Ovary (tissue), 10 donors: ENCODE measurements at regions of chrX and their contacts with region 1.

Region 1: GRCh38 chrX:133660281-133660680 is 245.0 kb upstream of the GPC4 start:
- DNase-seq: no peak
- H3K4me3 ChIP-seq: no peak overlapping the region
- H3K27ac ChIP-seq: no peak overlapping the region
- H3K4me1 ChIP-seq: peaks cover 1% of the 10 kb centered on the region
- H3K27me3 ChIP-seq: no peaks in the 10 kb centered on the region
- CTCF ChIP-seq: no peak
- EP300 ChIP-seq: no peak
- POLR2A ChIP-seq: no peak

Region 2: DNA sequence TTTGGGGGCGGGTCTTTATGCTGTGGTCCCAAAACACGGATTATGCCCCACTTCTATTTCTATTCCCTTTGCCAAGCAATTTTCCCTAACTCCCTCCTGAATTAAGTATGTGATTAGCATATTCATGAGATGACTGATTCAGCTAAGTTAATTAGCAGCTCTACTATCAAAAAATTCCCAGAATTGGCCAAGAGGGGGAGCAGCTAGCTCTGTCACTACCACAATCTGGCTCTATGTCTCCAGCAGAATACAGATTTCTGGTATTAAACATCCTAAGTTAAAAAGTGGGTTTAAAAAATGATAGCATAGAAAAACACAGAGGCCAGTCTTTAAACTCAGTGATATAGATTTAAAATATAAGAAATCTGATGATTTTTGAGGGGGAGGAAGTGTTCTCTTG is 325.3 kb before region 1 on chrX:
- intact Hi-C with region 1: loop called in 1 of 4 experiments (anchors 10 kb)
- DNase-seq: peak in 1 of 5 donors; percentile 35
- H3K4me3 ChIP-seq: no peak overlapping the region
- H3K27ac ChIP-seq: no peak overlapping the region
- H3K4me1 ChIP-seq: no peaks in the 10 kb centered on the region
- H3K27me3 ChIP-seq: no peaks in the 10 kb centered on the region
- CTCF ChIP-seq: peak in 2 of 3 donors; percentile 21 to 25
- EP300 ChIP-seq: no peak
- POLR2A ChIP-seq: no peak

Region 3: DNA sequence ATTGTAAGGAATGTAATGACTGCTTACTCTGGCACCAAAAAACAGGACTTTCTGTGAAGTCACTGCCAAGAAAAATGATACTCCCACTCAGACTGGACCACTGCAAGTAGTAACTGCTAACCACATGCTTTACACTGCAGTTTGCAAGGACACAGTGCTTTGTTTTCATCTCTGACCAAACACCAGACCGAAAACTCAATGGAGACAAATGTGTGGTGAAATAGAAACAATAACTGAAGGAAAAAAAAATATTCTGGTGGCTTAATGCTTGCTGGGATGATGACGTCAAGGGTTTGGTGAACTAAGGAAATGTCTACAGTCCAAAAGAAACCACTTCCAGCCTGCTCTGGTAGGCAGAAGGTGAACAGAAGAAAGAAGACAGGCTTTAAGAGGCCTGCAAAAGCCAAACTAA is 258.2 kb before region 1 on chrX:
- intact Hi-C with region 1: loop called in 1 of 4 experiments (anchors 10 kb)
- DNase-seq: peak in 2 of 5 donors; percentile 14 to 22
- H3K4me3 ChIP-seq: no peak overlapping the region
- H3K27ac ChIP-seq: peak overlapping the region in 1 of 2 donors; percentile 30
- H3K4me1 ChIP-seq: no peaks in the 10 kb centered on the region
- H3K27me3 ChIP-seq: no peaks in the 10 kb centered on the region
- CTCF ChIP-seq: no peak
- EP300 ChIP-seq: no peak
- POLR2A ChIP-seq: no peak

Region 4: GRCh38 chrX:133645977-133646718 is 14.1 kb before region 1 on chrX:
- intact Hi-C with region 1: no loop called
- DNase-seq: no peak
- H3K4me3 ChIP-seq: no peak overlapping the region
- H3K27ac ChIP-seq: no peak overlapping the region
- H3K4me1 ChIP-seq: no peaks in the 10 kb centered on the region
- H3K27me3 ChIP-seq: no peaks in the 10 kb centered on the region
- CTCF ChIP-seq: no peak
- EP300 ChIP-seq: no peak
- POLR2A ChIP-seq: no peak